GM13977 (cell line): ENCODE measurements at regions of chr16 and their contacts with region 1.

Region 1: GRCh38 chr16:11639925-11640899 is 28.0 kb upstream of the SNN start:
- DNase-seq: no peak
- CTCF ChIP-seq: no peak

Region 2: GRCh38 chr16:11296706-11297491 is 343.3 kb before region 1 on chr16:
- in situ Hi-C with region 1: no loop called
- DNase-seq: no peak
- CTCF ChIP-seq: no peak

Region 3: GRCh38 chr16:11535471-11535870 is 104.7 kb before region 1 on chr16:
- in situ Hi-C with region 1: loop called (anchors 10 kb)
- DNase-seq: no peak
- CTCF ChIP-seq: no peak

Region 4: DNA sequence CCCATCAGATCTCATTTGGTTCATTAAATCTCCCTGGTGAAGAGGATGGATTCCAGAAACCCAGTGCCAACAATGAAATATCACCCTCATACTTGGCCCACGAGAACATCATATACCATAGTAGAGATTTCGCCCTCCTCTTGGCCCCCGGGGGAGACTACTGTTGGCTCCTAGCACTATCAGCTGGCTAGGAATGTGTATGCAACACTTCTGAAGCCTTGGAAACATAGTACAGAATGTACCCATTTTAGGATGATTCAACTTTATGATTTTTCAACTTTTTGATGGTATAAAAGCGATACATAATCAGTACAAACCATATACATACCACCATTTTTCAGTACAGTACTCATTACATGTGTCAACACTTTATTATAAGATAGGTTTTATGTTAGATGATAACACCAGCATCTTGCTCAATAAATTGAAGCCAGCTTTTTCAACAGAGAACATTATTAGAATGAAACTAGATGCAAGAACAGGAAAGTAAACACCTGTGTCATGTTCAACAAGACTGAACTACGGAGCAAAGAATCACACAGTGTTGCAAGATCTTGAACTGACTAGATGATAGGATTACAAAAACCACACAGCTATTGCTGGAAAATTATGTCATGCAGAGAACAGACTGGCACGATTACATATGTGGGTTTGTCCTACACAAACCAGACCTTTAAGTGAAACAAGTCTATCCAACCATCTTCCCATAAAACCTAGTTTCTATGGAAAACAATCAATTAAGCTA is 193.9 kb after region 1 on chr16:
- in situ Hi-C with region 1: no loop called
- DNase-seq: peak; percentile 36
- CTCF ChIP-seq: no peak